SK-N-SH (cell line): ENCODE measurements at regions of chr6 and their contacts with region 1.

Region 1: GRCh38 chr6:170516783-170517616 is 36.1 kb downstream of the PSMB1 start:
- DNase-seq: peak; percentile 60
- H3K4me3 ChIP-seq: no peak overlapping the region; a peak in 1 of 4 replicates
- H3K27ac ChIP-seq: no peak overlapping the region
- H3K4me1 ChIP-seq: no peaks in the 10 kb centered on the region
- H3K27me3 ChIP-seq: no peaks in the 10 kb centered on the region
- CTCF ChIP-seq: peak; percentile 81
- EP300 ChIP-seq: no peak
- RAD21 ChIP-seq: peak; percentile 87

Region 2: DNA sequence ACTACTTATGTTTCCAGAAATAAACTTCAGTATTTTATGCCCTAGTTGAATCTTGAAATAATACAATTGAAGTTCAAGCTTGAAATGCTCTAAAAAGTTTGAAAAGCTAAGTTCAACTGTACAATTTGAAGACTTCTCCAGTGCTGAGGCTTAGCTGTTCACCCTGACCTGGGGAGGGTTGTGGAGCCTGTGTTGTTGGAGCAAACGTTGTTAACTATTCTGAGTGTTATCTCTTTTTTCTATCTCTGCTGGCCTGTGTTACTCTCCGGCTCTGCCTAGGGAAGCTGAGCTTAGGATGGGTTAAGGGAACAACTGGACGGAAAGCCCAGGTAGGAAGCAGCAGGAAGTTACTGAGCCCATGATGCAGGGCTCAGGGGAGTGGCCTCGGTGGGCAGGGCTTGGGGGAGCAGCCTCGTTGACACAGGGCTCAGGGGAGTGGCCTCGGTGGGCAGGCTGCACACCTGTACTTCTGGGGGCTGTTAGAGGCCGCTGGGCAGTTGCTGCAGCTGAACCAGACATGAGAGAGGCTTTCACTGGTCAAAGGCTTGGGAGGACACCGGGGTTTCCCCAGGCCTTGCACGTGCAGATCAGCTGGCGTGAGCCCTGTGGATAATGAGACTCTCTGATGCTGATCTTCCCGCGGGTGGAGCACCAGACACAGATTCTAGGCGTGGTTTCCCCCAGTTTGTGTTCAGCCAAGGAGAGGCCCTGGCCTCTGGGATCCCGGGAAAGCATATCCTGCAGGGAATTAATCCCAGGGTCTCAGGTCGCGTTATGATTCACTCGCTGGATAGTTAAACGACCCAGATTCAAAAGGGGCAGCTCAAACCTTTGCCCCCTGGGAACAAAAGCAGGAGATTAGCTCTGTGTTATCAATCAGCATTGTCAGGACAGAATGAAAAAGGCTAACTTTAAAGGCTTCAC is 706.7 kb before region 1 on chr6:
- CTCF ChIA-PET with region 1: interaction called, 10 read pairs
- POLR2A ChIA-PET with region 1: no interaction called
- DNase-seq: peak; percentile 65
- H3K4me3 ChIP-seq: no peak overlapping the region
- H3K27ac ChIP-seq: no peak overlapping the region
- H3K4me1 ChIP-seq: peaks cover 0 to 10% of the 10 kb centered on the region in 2 experiments; a peak in 1 of 4 replicates
- H3K27me3 ChIP-seq: no peaks in the 10 kb centered on the region
- CTCF ChIP-seq: no peak
- EP300 ChIP-seq: no peak
- RAD21 ChIP-seq: no peak

Region 3: DNA sequence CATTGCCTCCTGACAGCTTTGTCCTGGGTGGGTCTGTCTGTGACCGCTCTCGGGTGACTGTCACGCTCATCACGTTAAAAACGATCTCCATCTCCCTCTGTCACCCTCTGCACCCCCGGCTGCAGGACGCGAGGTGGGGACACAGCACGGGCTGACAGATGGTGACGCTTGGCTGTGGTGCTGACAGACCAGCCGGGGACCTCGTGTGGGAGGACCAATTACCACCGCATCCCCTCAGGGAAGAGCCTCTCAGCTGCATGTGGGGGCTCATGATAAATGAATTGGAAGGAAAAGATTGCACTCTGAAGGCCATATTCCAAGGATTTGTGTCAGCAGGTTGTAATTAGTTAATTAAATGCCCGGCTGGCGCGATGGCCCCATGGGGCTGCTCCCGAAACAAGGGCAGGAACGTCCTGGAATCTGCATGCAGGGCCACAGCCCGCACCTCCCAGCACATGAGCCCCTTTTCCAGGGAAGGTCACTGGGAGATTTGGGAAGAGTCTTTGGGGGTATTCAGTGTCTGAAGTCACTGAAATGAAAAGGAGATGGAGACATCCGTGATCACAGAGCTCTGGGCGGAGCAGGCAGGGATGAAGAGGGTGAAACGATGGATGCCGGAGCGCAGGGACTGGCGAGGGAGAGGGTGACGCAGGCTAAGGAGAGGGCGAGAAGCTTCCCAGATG is 678.5 kb before region 1 on chr6:
- CTCF ChIA-PET with region 1: interaction called, 59 read pairs
- POLR2A ChIA-PET with region 1: no interaction called
- DNase-seq: peak; percentile 85
- H3K4me3 ChIP-seq: peak overlapping the region in 1 of 2 experiments; percentile 17; a peak in 1 of 4 replicates
- H3K27ac ChIP-seq: no peak overlapping the region
- H3K4me1 ChIP-seq: peaks cover 0 to 17% of the 10 kb centered on the region in 2 experiments; a peak in 2 of 4 replicates
- H3K27me3 ChIP-seq: no peaks in the 10 kb centered on the region; the same call in 1 of the 2 replicates
- CTCF ChIP-seq: no peak
- EP300 ChIP-seq: no peak
- RAD21 ChIP-seq: peak; percentile 60

Region 4: DNA sequence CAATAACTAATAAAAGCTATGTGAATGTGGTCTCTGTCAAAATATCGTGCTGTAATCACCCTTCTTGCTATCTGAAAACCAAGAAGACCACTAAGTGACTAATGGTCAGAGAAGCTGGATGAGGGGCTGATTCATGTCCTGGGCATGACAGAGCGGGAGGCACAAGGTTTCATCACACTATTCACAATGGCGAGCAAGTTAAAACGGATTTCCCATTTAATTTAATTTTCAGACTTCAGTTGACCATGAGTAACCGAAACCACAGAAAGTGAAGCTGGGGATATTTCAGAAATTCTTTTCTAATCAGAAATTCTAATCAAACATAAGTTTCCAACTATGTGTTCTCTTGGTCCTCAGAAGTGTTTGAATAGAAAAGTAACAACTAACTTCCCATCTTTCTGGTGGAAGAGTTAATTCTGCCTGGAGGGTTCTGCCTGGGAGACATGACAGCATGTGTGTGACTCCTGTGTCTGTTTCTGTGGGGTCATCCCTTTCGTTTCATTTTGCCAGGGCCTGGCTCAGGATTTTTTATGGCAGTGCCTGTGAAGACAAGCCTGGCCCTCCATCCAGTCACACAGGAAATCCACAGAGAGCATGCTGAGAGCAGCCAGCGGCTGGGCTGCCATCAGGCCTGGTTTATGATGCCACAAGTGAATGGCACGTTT is 111.6 kb before region 1 on chr6:
- CTCF ChIA-PET with region 1: no interaction called
- POLR2A ChIA-PET with region 1: no interaction called
- DNase-seq: no peak
- H3K4me3 ChIP-seq: no peak overlapping the region
- H3K27ac ChIP-seq: peak overlapping the region; percentile 43 to 95; a peak in 3 of 4 replicates
- H3K4me1 ChIP-seq: peaks cover 0 to 19% of the 10 kb centered on the region in 2 experiments; a peak in 2 of 4 replicates
- H3K27me3 ChIP-seq: no peaks in the 10 kb centered on the region
- CTCF ChIP-seq: no peak
- EP300 ChIP-seq: peak in 1 of 2 experiments; percentile 75; a peak in 2 of 4 replicates
- RAD21 ChIP-seq: no peak